HepG2 (cell line): ENCODE measurements at regions of chr2 and their contacts with region 1.

Region 1: DNA sequence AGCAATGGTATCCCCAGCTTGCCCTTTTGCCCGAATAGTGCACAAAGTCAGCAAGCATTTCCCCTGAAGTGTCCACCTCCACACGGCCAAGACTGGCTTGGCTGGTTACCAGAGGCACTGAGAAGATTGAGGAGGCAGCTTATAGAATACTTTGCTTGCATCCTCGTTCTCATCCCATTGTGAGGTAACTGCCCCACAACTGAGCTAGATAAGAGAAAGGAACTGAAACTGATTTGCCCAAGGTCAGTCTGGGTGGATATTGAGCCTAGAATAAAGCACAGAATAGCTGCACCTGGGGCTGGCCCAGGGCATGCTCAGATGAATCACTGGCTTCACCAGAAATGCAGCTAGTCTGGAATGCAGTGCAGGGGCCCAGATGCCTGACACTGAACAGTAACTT is 32.7 kb upstream of the MAP4K3 start:
- DNase-seq: peak; percentile 88
- ATAC-seq: peak; percentile 98
- H3K4me3 ChIP-seq: peak overlapping the region in 2 of 3 experiments; percentile 27 to 35; a peak in 2 of 6 replicates
- H3K27ac ChIP-seq: peak overlapping the region; percentile 54
- H3K4me1 ChIP-seq: peaks cover 38% of the 10 kb centered on the region
- H3K27me3 ChIP-seq: no peaks in the 10 kb centered on the region
- CTCF ChIP-seq: no peak
- EP300 ChIP-seq: no peak
- POLR2A ChIP-seq: no peak
- RAD21 ChIP-seq: no peak

Region 2: DNA sequence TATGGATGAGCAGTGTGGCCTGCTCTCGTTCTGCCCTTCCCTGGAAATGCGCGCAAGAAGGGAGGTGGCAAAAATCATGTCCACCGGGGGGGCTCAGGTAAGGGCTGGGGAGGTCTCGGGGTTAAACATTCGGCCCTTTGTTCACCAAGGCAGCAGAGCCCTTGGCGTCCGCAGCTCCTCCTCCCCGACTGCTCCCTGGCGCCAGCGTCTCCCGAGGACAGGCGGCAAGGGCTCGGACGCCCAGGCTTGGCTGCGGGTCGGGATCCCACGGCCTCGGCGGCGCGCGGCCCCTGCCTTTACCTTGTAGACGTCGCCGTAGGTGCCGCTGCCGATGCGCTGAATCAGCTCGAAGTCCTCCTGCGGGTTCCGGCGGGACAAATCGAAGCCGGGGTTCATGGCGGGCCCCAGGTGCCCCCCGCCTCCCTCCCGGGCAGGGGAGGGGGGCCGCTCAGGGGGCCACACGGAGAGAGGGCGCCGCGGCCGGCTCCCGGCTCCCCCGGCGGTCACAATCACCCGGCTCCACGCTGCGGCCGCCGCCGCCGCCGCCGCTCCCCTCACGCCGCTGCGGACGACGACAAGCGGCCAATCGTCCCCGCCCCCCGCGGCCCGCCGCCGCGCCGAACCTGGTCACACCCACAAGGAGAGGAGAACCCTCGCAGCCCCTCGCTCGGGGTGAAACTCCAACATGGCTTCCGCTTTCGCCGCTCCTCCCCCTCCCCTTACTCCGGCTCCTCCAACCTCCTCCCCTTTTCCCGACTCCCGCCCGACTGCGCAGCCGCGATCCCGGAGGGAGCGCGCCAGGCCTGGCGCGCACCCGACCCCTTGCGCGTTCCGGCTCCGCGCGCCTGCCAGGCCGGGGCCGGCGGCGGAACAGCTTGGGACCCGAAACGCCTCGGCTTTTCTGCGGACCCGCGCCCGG is 33.0 kb before region 1 on chr2 and contains the start of gene MAP4K3:
- CTCF ChIA-PET with region 1: no interaction called
- POLR2A ChIA-PET with region 1: interaction called, 24 read pairs
- in situ Hi-C with region 1: no loop called
- intact Hi-C with region 1: loop called (anchors 1 kb)
- DNase-seq: peak; percentile 96
- ATAC-seq: peak; percentile 85
- H3K4me3 ChIP-seq: peak within 1 kb of the TSS; percentile 92 to 95 (median 93)
- H3K27ac ChIP-seq: peak within 1 kb of the TSS; percentile 94
- H3K4me1 ChIP-seq: peaks cover 62% of the 10 kb centered on the region
- H3K27me3 ChIP-seq: no peaks in the 10 kb centered on the region; a peak in 1 of 5 replicates
- CTCF ChIP-seq: peak; percentile 32
- EP300 ChIP-seq: peak in 1 of 2 experiments; percentile 42; a peak in 1 of 4 replicates
- POLR2A ChIP-seq: peak; percentile 64 to 81
- RAD21 ChIP-seq: peak; percentile 63
- total RNA-seq, gene MAP4K3: 45.9 and 49.6 TPM in 2 replicates

Region 3: GRCh38 chr2:39447266-39448169 is 22.3 kb before region 1 on chr2:
- CTCF ChIA-PET with region 1: no interaction called
- POLR2A ChIA-PET with region 1: interaction called, 40 read pairs
- in situ Hi-C with region 1: no loop called
- intact Hi-C with region 1: no loop called
- DNase-seq: no peak
- ATAC-seq: peak; percentile 48
- H3K4me3 ChIP-seq: no peak overlapping the region
- H3K27ac ChIP-seq: peak overlapping the region; percentile 45
- H3K4me1 ChIP-seq: peaks cover 46% of the 10 kb centered on the region
- H3K27me3 ChIP-seq: no peaks in the 10 kb centered on the region
- CTCF ChIP-seq: no peak
- EP300 ChIP-seq: no peak
- POLR2A ChIP-seq: no peak
- RAD21 ChIP-seq: no peak

Region 4: GRCh38 chr2:39481611-39482010 is 11.8 kb after region 1 on chr2:
- CTCF ChIA-PET with region 1: no interaction called
- POLR2A ChIA-PET with region 1: interaction called, 4 read pairs
- in situ Hi-C with region 1: no loop called
- intact Hi-C with region 1: loop called (anchors 2 kb)
- DNase-seq: no peak
- ATAC-seq: no peak
- H3K4me3 ChIP-seq: no peak overlapping the region
- H3K27ac ChIP-seq: no peak overlapping the region
- H3K4me1 ChIP-seq: no peaks in the 10 kb centered on the region
- H3K27me3 ChIP-seq: no peaks in the 10 kb centered on the region
- CTCF ChIP-seq: no peak
- EP300 ChIP-seq: no peak
- POLR2A ChIP-seq: no peak
- RAD21 ChIP-seq: no peak

Region 5: GRCh38 chr2:39492095-39492590 is 22.3 kb after region 1 on chr2:
- CTCF ChIA-PET with region 1: no interaction called
- POLR2A ChIA-PET with region 1: interaction called, 11 read pairs
- in situ Hi-C with region 1: no loop called
- intact Hi-C with region 1: loop called (anchors 1 kb)
- DNase-seq: peak; percentile 94
- ATAC-seq: peak; percentile 87
- H3K4me3 ChIP-seq: no peak overlapping the region; a peak in 1 of 6 replicates
- H3K27ac ChIP-seq: peak overlapping the region; percentile 1
- H3K4me1 ChIP-seq: peaks cover 40% of the 10 kb centered on the region
- H3K27me3 ChIP-seq: no peaks in the 10 kb centered on the region
- CTCF ChIP-seq: no peak
- EP300 ChIP-seq: peak in 1 of 2 experiments; percentile 94; a peak in 2 of 4 replicates
- POLR2A ChIP-seq: no peak
- RAD21 ChIP-seq: no peak